ENCODE measurements at regions of chr12 and their contacts with region 1.

Region 1: DNA sequence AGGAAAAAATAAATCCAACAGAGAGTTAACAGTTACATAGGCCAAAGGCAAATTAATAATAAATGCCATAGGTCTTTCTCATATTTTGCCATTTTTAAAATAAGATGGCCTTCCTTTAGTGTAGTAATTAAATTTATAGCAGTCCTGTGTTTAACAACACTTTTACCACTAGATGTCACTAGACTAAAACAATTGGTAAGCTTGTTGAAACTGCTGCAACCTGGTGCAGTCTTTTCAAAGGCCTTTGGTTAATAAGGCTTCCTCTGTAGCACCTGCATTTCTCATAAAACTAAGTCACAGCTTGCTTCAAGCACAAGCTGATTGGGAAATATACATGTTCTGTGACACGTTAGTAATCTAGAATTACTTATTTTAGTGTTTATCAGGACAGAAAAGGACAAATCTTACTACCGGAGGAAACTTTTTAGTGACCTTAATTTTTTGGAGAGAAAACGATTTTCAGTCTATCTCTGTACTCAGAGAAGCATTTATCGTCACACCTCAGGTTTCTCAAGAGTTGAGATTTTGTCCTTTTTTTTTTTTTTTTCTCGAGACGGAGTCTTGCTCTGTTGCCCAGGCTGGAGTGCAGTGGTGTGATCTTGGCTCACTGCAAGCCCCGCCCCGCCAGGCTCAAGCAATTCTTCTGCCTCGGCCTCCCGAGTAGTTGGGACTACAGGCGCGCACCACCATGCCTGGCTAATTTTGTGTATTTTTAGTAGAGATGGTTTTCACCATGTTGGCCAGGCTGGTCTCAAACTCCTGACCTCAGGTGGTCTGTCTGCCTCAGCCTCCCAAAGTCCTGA is 20.0 kb downstream of the BORCS5 start:
- DNase-seq: no peak
- ATAC-seq: peak; percentile 85 to 89
- H3K4me3 ChIP-seq: no peak overlapping the region
- H3K27ac ChIP-seq: no peak overlapping the region
- H3K4me1 ChIP-seq: peaks cover 19% of the 10 kb centered on the region
- H3K27me3 ChIP-seq: no peaks in the 10 kb centered on the region
- CTCF ChIP-seq: peak; percentile 75

Region 2: GRCh38 chr12:12081836-12082497 is 294.9 kb before region 1 on chr12:
- intact Hi-C with region 1: no loop called
- DNase-seq: no peak
- ATAC-seq: peak; percentile 59 to 73
- H3K4me3 ChIP-seq: no peak overlapping the region
- H3K27ac ChIP-seq: peak overlapping the region; percentile 75
- H3K4me1 ChIP-seq: peaks cover 5% of the 10 kb centered on the region
- H3K27me3 ChIP-seq: no peaks in the 10 kb centered on the region
- CTCF ChIP-seq: peak; percentile 33

Region 3: GRCh38 chr12:12562585-12563261 is 185.9 kb after region 1 on chr12 and contains the start of gene DUSP16:
- intact Hi-C with region 1: loop called (anchors 10 kb)
- DNase-seq: peak; percentile 94
- ATAC-seq: peak; percentile 94 to 96
- H3K4me3 ChIP-seq: peak within 1 kb of the TSS; percentile 69
- H3K27ac ChIP-seq: peak within 1 kb of the TSS; percentile 98
- H3K4me1 ChIP-seq: peaks cover 28% of the 10 kb centered on the region
- H3K27me3 ChIP-seq: no peaks in the 10 kb centered on the region
- CTCF ChIP-seq: peak; percentile 19
- total RNA-seq, gene DUSP16: 44.0 TPM

Region 4: GRCh38 chr12:14314801-14315200 is 1938.0 kb after region 1 on chr12:
- intact Hi-C with region 1: no loop called
- DNase-seq: no peak
- ATAC-seq: peak in 1 of 2 donors; percentile 68
- H3K4me3 ChIP-seq: no peak overlapping the region
- H3K27ac ChIP-seq: no peak overlapping the region
- H3K4me1 ChIP-seq: no peaks in the 10 kb centered on the region
- H3K27me3 ChIP-seq: no peaks in the 10 kb centered on the region
- CTCF ChIP-seq: no peak